Psoas muscle (tissue), 8 donors: ENCODE measurements at regions of chr1 and their contacts with region 1.

Region 1: DNA sequence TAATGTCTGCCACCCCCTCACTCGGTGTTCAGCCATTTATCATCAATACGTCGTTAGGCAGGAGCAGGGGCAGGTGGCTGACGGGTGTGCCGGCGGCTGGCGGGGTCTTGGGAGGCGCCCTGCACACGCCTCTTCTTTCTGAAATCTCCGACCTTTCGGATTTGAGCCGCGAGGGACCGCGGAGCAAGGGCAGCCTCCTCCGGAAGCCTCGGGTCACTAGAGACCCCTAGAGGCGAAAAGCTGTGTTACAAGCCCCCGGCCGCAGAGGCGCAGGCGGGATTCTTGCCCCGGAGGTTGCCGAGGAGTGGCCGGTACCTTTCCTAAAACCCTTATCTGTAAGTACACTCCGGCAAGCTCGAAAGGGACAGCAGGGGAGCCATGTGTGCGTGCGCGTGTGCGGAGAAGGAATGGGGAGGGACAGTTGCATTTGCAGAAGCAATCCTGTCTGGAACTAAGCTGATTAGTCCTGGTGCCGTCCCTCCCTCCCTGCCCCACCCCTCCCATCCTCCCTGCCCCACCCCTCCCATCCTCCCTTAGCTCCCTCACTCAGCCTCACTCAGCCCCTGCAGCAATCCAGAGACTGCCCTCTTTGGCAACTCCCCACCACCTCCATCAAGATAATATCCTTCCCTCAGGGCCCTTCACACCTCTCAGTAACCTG is 11.0 kb downstream of the BRINP2 start:
- DNase-seq: peak; percentile 53 to 70
- ATAC-seq: peak; percentile 71 to 92 (median 88)
- H3K4me3 ChIP-seq: peak overlapping the region; percentile 49
- H3K27ac ChIP-seq: no peak overlapping the region
- H3K4me1 ChIP-seq: no peaks in the 10 kb centered on the region
- H3K27me3 ChIP-seq: peaks cover 3 to 12% (median 6%) of the 10 kb centered on the region in 3 donors
- CTCF ChIP-seq: peak; percentile 79

Region 2: GRCh38 chr1:176897350-176898236 is 284.2 kb before region 1 on chr1:
- intact Hi-C with region 1: loop called (anchors 1 to 5 kb)
- DNase-seq: peak; percentile 46 to 72
- ATAC-seq: peak; percentile 67 to 86 (median 73)
- H3K4me3 ChIP-seq: peak overlapping the region; percentile 45
- H3K27ac ChIP-seq: no peak overlapping the region
- H3K4me1 ChIP-seq: peaks cover 4% of the 10 kb centered on the region
- H3K27me3 ChIP-seq: peaks cover 0 to 24% (median 7%) of the 10 kb centered on the region in 3 donors
- CTCF ChIP-seq: peak; percentile 63

Region 3: DNA sequence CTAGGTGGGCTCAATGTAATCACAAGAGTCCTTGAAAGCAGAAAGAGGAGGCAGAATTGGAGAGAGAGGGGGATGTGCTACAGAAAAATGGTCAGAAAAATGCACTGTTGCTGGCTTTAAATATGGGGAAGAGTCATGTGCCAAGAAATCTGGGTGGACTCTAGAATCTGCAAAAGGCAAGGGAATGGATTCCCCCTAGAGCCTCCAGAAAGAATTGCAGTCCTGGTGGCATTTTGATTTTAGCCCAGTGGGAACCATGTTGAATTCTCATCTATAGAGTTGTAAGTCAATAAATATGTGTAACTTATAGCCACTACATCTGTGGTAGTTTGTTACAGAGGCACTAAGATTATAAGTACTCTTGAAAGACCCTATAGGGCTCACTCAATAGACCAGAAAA is 227.5 kb before region 1 on chr1:
- intact Hi-C with region 1: loop called in 1 of 2 experiments (anchors 5 kb)
- DNase-seq: no peak
- ATAC-seq: no peak
- H3K4me3 ChIP-seq: no peak overlapping the region
- H3K27ac ChIP-seq: no peak overlapping the region
- H3K4me1 ChIP-seq: no peaks in the 10 kb centered on the region
- H3K27me3 ChIP-seq: no peaks in the 10 kb centered on the region
- CTCF ChIP-seq: no peak